Activated CD4-positive, alpha-beta memory T cell treated with anti-CD3 and anti-CD28 coated beads for 36 hours (primary cell): ENCODE measurements at regions of chr16 and their contacts with region 1.

Region 1: GRCh38 chr16:21001262-21001661 is 100.7 kb downstream of the LYRM1 start:
- DNase-seq: peak; percentile 53
- H3K4me3 Mint-ChIP-seq: no peak overlapping the region
- H3K27ac Mint-ChIP-seq: no peak overlapping the region
- H3K4me1 Mint-ChIP-seq: no peaks in the 10 kb centered on the region
- H3K27me3 Mint-ChIP-seq: peaks cover 1% of the 10 kb centered on the region

Region 2: GRCh38 chr16:20849587-20850390 is 151.5 kb before region 1 on chr16:
- CTCF ChIA-PET with region 1: interaction called, 9 read pairs
- POLR2A ChIA-PET with region 1: no interaction called
- intact Hi-C with region 1: loop called (anchors 1 kb)
- DNase-seq: peak; percentile 75
- H3K4me3 Mint-ChIP-seq: no peak overlapping the region
- H3K27ac Mint-ChIP-seq: no peak overlapping the region
- H3K4me1 Mint-ChIP-seq: peaks cover 11% of the 10 kb centered on the region
- H3K27me3 Mint-ChIP-seq: no peaks in the 10 kb centered on the region